ENCODE measurements at regions of chr15 and their contacts with region 1.

Region 1: GRCh38 chr15:27479296-27480140 is 508.5 kb downstream of the GABRG3 start:
- DNase-seq: no peak
- ATAC-seq: no peak
- H3K4me3 Mint-ChIP-seq: no peak overlapping the region
- H3K27ac Mint-ChIP-seq: no peak overlapping the region
- H3K4me1 Mint-ChIP-seq: no peaks in the 10 kb centered on the region
- H3K27me3 Mint-ChIP-seq: no peaks in the 10 kb centered on the region

Region 2: DNA sequence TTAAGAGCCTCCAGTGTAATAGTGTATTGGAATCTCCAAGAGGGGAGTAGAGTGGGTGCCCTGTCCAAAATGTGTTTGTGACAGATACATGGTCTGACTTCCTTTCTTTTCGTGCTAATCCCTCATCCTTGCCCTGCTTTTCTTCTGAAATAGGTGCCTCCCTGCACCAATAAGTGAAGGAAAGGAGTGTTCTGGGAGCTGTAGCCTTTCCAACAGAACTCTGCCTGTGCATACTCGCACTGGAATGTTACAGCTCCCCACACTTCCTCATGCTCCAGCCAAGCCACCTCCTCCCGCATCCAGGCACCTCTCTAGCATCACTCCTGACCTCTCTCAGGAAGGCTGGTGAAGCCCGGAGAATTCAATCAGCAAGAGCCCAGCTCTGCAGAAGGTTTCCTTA is 30.5 kb before region 1 on chr15:
- CTCF ChIA-PET with region 1: no interaction called
- POLR2A ChIA-PET with region 1: no interaction called
- intact Hi-C with region 1: no loop called
- DNase-seq: no peak
- ATAC-seq: no peak
- H3K4me3 Mint-ChIP-seq: no peak overlapping the region
- H3K27ac Mint-ChIP-seq: no peak overlapping the region
- H3K4me1 Mint-ChIP-seq: no peaks in the 10 kb centered on the region
- H3K27me3 Mint-ChIP-seq: no peaks in the 10 kb centered on the region

Region 3: GRCh38 chr15:27514526-27514925 is 35.0 kb after region 1 on chr15:
- CTCF ChIA-PET with region 1: no interaction called
- POLR2A ChIA-PET with region 1: no interaction called
- intact Hi-C with region 1: no loop called
- DNase-seq: no peak
- ATAC-seq: no peak
- H3K4me3 Mint-ChIP-seq: no peak overlapping the region
- H3K27ac Mint-ChIP-seq: no peak overlapping the region
- H3K4me1 Mint-ChIP-seq: no peaks in the 10 kb centered on the region
- H3K27me3 Mint-ChIP-seq: peaks cover 4% of the 10 kb centered on the region

Region 4: DNA sequence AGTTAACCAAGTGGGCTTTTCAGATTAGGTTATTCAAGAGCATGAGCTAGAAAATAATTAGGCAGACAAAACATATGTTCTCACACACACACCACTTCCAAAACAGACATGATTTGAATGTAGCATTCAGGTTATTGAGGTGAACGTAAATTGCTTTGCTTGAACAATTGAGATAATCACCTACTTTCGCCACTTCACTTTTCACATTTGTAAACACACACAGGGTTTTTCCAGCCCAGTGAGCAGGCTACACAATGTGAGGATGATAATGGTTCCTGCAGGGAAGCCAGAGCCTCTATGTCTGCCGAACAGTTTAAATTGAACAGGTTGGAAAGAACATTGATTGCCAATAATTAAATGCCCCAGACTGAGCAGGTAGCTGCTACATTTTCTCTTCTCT is 58.8 kb after region 1 on chr15:
- CTCF ChIA-PET with region 1: no interaction called
- POLR2A ChIA-PET with region 1: no interaction called
- intact Hi-C with region 1: loop called in 1 of 2 experiments (anchors 10 kb)
- DNase-seq: no peak
- ATAC-seq: no peak
- H3K4me3 Mint-ChIP-seq: no peak overlapping the region
- H3K27ac Mint-ChIP-seq: no peak overlapping the region
- H3K4me1 Mint-ChIP-seq: no peaks in the 10 kb centered on the region
- H3K27me3 Mint-ChIP-seq: no peaks in the 10 kb centered on the region